ENCODE measurements at regions of chr14 and their contacts with region 1.

Region 1: GRCh38 chr14:21269252-21270046 is at the start of gene HNRNPC:
- DNase-seq: peak; percentile 100
- H3K4me3 ChIP-seq: peak within 1 kb of the TSS; percentile 92 to 99
- H3K4me3 Mint-ChIP-seq: peak within 1 kb of the TSS; percentile 92 to 100 (median 100)
- H3K27ac ChIP-seq: peak within 1 kb of the TSS; percentile 98
- H3K27ac Mint-ChIP-seq: peak within 1 kb of the TSS; percentile 96 to 100 (median 100)
- H3K4me1 ChIP-seq: peaks cover 48% of the 10 kb centered on the region
- H3K4me1 Mint-ChIP-seq: peaks cover 26 to 49% (median 35%) of the 10 kb centered on the region in 4 donors
- H3K27me3 ChIP-seq: no peaks in the 10 kb centered on the region
- H3K27me3 Mint-ChIP-seq: no peaks in the 10 kb centered on the region
- total RNA-seq, gene HNRNPC: 538 to 539 TPM

Region 2: DNA sequence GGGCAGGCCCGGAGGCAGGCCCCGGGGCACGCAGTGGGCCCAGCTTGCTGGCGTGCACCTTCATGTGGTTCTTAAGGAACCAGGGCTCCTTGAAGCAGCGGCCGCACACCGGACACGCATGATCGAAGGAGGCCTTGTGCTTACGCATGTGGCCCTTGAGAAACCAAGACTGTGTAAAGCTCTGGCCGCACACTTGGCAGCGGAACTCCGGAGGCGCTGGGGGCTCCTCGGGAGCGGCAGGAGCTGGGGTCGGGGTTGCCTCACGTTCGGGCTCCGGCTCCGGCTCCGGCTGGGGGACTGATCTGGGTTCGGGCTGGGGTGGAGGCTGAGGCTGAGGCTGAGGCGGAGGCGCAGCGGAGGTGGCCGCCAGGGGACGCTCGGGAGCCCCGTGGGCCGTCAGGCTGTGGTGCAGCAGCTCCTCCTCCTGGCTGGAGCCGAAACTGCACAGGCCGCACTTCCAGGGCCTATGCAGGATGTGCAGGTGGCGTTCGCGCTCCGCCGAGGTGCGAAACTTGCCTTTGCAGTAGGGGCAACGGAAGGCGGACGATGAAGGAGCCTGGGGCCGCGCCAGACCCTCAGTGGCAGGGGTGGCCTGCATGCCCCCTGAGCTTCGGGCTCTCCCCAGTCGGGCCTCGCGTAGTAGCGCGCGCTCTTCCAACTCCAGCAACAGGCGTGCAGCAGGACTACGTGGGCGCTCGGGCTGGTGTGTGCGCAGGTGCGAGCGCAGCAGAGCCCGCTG is 177.0 kb before region 1 on chr14:
- CTCF ChIA-PET with region 1: no interaction called
- POLR2A ChIA-PET with region 1: no interaction called
- intact Hi-C with region 1: loop called (anchors 1 kb)
- DNase-seq: peak; percentile 86 to 91 (median 90)
- H3K4me3 ChIP-seq: no peak overlapping the region
- H3K4me3 Mint-ChIP-seq: peak overlapping the region in 2 of 8 donors; percentile 2 to 72
- H3K27ac ChIP-seq: peak overlapping the region; percentile 17
- H3K27ac Mint-ChIP-seq: peak overlapping the region in 6 of 7 donors; percentile 79 to 97 (median 94)
- H3K4me1 ChIP-seq: peaks cover 21% of the 10 kb centered on the region
- H3K4me1 Mint-ChIP-seq: peaks cover 17 to 50% (median 29%) of the 10 kb centered on the region in 4 donors
- H3K27me3 ChIP-seq: no peaks in the 10 kb centered on the region
- H3K27me3 Mint-ChIP-seq: no peaks in the 10 kb centered on the region

Region 3: DNA sequence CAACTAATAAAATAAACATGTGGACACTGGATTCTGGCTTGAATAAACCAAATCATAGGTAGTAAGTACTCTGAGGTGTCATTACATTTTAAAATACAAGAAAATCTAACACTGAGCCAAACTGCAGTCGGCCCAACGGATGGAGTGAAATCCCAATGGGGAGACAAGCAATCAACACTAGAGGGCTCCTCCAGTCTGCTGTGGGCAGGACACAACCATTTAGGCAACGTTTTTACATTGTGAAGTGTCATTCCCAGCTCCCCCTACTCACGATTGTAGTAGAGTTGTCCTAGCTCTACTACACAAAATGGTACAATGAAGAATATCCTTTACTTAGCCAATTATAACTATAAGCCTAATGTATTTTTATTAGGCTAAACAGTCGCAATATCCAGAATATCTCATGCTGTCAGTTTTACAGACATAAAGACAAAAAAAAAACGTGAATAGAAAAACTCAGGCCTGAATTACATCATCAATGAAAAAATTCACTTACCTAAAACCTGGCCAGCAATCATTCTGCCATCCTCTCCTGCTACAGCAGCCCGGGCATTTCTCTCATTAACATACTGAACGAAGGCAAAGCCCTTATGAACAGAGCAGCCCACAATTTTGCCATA is 35.9 kb before region 1 on chr14:
- CTCF ChIA-PET with region 1: interaction called, 9 read pairs
- POLR2A ChIA-PET with region 1: interaction called, 24 read pairs
- intact Hi-C with region 1: loop called (anchors 2 kb)
- DNase-seq: peak in 2 of 5 donors; percentile 20 to 47
- H3K4me3 ChIP-seq: no peak overlapping the region
- H3K4me3 Mint-ChIP-seq: peak overlapping the region in 7 of 8 donors; percentile 29 to 83 (median 60)
- H3K27ac ChIP-seq: peak overlapping the region; percentile 11
- H3K27ac Mint-ChIP-seq: peak overlapping the region; percentile 57 to 91 (median 89)
- H3K4me1 ChIP-seq: peaks cover 100% of the 10 kb centered on the region
- H3K4me1 Mint-ChIP-seq: peaks cover 70 to 93% (median 81%) of the 10 kb centered on the region in 4 donors
- H3K27me3 ChIP-seq: no peaks in the 10 kb centered on the region
- H3K27me3 Mint-ChIP-seq: no peaks in the 10 kb centered on the region

Region 4: GRCh38 chr14:21298358-21298757 is 28.9 kb after region 1 on chr14:
- CTCF ChIA-PET with region 1: no interaction called
- POLR2A ChIA-PET with region 1: no interaction called
- intact Hi-C with region 1: no loop called
- DNase-seq: no peak
- H3K4me3 ChIP-seq: no peak overlapping the region
- H3K4me3 Mint-ChIP-seq: no peak overlapping the region
- H3K27ac ChIP-seq: no peak overlapping the region
- H3K27ac Mint-ChIP-seq: no peak overlapping the region
- H3K4me1 ChIP-seq: peaks cover 4% of the 10 kb centered on the region
- H3K4me1 Mint-ChIP-seq: peaks cover 0 to 6% (median 2%) of the 10 kb centered on the region in 4 donors
- H3K27me3 ChIP-seq: peaks cover 4% of the 10 kb centered on the region
- H3K27me3 Mint-ChIP-seq: peaks cover 12 to 14% of the 10 kb centered on the region in 2 donors

Region 5: DNA sequence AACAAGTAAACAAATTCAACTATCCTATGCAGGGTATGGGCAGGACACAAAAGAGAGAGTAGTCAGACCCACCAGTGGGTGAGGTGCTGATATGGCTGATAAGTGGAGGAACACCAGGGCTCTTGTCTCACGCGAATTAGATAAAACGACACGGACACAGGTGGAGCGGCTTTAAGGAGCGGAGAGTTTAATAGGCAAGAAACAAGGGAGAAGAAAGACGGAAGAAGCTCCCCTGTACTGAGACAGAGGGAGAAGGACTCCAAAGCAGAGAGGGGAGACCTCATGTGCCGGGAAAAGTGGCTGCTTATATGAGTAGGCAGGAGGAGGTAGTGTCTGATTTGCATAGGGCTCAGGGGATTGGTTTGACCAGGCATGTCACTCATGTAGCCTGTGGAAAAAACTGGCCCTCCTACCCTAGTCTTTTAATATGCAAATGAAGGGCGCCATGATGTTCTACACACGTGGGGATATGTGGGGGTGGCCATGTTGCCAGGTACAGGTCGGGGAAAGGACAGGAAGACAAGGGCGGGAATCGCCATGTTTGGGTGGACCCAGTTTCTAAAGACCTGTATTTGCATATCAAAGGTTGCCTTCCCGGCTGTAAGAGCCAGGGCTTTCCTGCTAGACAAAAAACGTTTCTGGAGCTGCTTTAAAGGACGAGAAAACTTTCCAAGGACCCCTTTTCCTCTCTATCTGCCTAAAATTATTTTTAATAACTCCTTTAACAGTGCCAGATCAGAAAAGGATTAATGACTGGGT is 39.2 kb after region 1 on chr14:
- CTCF ChIA-PET with region 1: interaction called, 3 read pairs
- POLR2A ChIA-PET with region 1: interaction called, 4 read pairs
- intact Hi-C with region 1: loop called (anchors 1 kb)
- DNase-seq: peak; percentile 83 to 93 (median 85)
- H3K4me3 ChIP-seq: peak overlapping the region; percentile 43 to 45
- H3K4me3 Mint-ChIP-seq: peak overlapping the region; percentile 81 to 91 (median 88)
- H3K27ac ChIP-seq: peak overlapping the region; percentile 48
- H3K27ac Mint-ChIP-seq: peak overlapping the region; percentile 80 to 96 (median 92)
- H3K4me1 ChIP-seq: peaks cover 13% of the 10 kb centered on the region
- H3K4me1 Mint-ChIP-seq: peaks cover 12 to 19% (median 17%) of the 10 kb centered on the region in 4 donors
- H3K27me3 ChIP-seq: no peaks in the 10 kb centered on the region
- H3K27me3 Mint-ChIP-seq: no peaks in the 10 kb centered on the region

Region 6: DNA sequence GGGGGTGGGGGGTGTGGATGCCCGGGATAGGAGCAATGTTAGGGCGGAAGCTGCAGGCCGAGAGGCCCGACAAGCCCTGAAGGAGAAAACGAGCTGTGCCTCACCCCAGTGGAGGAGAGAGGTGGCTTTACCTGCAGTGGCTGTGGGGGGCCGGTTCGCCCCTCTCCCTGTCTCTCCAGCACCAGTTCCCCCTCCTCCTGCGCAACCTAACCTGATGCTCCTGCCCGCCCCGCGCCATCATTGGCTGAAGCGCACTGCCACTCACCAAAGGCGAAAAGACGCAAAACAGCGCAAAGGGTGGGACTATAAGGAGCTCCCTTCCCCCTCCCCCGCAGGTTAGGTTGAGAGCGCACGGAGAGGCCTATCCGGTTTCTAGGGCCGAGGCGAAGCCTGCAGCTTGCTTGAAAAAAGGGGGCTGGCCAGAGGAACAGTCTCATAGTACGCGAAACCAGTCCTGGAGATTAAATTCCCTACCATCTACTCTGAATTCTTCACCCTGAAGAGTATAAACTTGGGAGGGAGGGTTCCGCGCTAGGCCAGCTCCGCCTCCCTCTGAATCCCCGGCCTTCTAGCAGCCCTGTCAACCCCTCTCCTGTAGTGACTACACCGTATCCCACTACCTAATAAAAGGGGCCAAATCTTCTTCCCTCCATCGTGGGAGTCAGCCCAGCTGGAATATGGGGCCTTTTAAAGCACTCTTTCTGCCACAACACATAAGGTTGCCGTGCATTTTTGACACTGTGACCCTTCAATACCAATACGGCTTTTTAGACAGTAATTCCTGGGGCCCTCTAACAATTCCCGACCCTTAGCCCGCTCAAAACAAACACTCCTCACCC is 167.8 kb after region 1 on chr14:
- CTCF ChIA-PET with region 1: interaction called, 4 read pairs
- POLR2A ChIA-PET with region 1: interaction called, 4 read pairs
- intact Hi-C with region 1: loop called (anchors 1 kb)
- DNase-seq: peak; percentile 98 to 99 (median 98)
- H3K4me3 ChIP-seq: peak overlapping the region; percentile 64 to 95
- H3K4me3 Mint-ChIP-seq: peak overlapping the region; percentile 94 to 99 (median 96)
- H3K27ac ChIP-seq: peak overlapping the region; percentile 85
- H3K27ac Mint-ChIP-seq: peak overlapping the region; percentile 93 to 99 (median 96)
- H3K4me1 ChIP-seq: peaks cover 38% of the 10 kb centered on the region
- H3K4me1 Mint-ChIP-seq: peaks cover 49 to 74% (median 62%) of the 10 kb centered on the region in 4 donors
- H3K27me3 ChIP-seq: no peaks in the 10 kb centered on the region
- H3K27me3 Mint-ChIP-seq: no peaks in the 10 kb centered on the region

Region 7: DNA sequence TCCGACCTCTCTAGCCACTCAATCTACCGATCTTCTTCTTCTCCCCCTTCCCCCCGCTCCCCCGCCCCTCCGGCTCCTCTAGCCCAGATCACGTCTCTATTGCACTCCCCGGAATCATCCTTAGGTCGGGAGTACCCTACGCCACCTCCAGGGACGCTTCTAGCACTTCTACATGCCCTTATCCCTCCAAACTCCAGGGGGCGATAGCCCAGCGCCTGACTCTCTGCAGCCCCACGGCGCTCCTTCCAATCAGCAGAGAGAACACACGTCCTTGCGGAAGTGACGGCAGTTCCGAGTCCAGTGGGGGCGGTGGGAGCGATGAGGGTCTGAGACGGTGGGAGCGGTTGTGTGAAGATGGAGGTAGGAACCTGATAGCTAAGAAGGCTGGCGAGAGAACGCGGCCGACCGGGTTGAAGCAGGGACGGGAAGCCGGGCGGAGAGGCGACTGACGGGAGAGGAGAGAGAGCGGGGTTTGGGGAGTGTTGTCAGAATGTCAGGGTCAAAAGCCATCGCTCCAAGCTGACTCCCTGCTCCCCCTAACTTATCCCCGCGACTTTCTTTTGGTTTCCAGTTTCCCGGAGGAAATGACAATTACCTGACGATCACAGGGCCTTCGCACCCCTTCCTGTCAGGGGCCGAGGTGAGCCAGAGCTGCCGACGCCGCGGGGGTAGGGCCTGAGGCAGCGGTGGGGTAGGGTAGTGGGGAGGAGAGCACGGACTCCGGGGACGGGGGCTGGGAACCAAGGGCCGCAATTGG is 207.7 kb after region 1 on chr14 and contains the starts of genes RAB2B and TOX4:
- CTCF ChIA-PET with region 1: no interaction called
- POLR2A ChIA-PET with region 1: interaction called, 3 read pairs
- intact Hi-C with region 1: loop called (anchors 1 kb)
- DNase-seq: peak; percentile 98
- H3K4me3 ChIP-seq: peak within 1 kb of the TSS; percentile 69 to 97
- H3K4me3 Mint-ChIP-seq: peak within 1 kb of the TSS; percentile 98 to 100 (median 100)
- H3K27ac ChIP-seq: peak within 1 kb of the TSS; percentile 81
- H3K27ac Mint-ChIP-seq: peak within 1 kb of the TSS; percentile 95 to 100 (median 100)
- H3K4me1 ChIP-seq: peaks cover 27% of the 10 kb centered on the region
- H3K4me1 Mint-ChIP-seq: peaks cover 28 to 63% (median 45%) of the 10 kb centered on the region in 4 donors
- H3K27me3 ChIP-seq: no peaks in the 10 kb centered on the region
- H3K27me3 Mint-ChIP-seq: no peaks in the 10 kb centered on the region
- total RNA-seq, gene RAB2B: 29.3 to 30.4 TPM
- total RNA-seq, gene TOX4: 83.6 to 86.0 TPM

Measured in CD4-positive, alpha-beta memory T cell (primary cell).